Transverse colon (tissue), 4 donors: ENCODE measurements at regions of chr11 and their contacts with region 1.

Region 1: DNA sequence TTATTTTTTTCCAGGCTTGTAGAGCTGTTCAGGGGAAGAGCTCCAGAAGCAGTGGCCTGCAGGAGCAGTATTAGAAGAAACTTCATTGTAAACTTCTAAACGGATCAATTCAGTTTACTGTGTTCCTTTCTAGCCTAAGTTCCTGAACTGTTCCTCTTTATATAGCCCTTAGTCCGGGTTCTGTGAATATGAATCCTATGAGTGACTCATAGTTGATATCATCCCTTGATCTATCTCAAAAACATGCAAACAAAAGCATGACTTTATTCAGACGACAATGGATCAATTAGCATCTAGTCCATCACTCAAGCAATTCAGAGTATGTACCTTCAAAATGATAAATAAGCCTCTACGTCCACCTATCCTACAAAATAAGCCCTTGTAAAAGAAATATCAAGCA is at the start of gene MMP12:
- DNase-seq: no peak
- H3K4me3 ChIP-seq: no peak within 1 kb of the TSS
- H3K27ac ChIP-seq: no peak within 1 kb of the TSS
- H3K4me1 ChIP-seq: no peaks in the 10 kb centered on the region
- H3K27me3 ChIP-seq: no peaks in the 10 kb centered on the region
- CTCF ChIP-seq: no peak
- EP300 ChIP-seq: no peak
- POLR2A ChIP-seq: no peak
- total RNA-seq, gene MMP12: 0.55 to 4.9 TPM in 2 of 4 donors, not detected in the others

Region 2: DNA sequence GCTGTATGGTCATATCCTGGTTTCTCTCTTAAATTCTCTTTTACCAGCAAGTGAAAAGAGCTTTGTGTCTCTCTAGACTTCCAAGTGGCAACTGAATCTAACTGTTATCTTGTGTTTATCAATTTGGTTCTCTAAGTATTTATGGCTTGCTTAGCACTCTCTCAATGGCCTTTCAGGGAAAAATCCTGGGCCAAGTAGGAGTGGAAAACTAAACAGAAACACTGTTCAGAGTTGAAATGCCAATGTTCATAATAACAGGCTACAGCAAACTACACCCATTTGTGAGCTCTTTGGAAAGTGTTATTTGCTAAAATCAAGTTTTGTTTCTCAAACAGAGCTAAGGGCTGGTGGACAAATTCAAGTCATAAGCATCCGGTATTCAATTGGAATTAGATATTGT is 10.1 kb before region 1 on chr11:
- in situ Hi-C with region 1: no loop called
- intact Hi-C with region 1: loop called (anchors 1 kb)
- DNase-seq: no peak
- H3K4me3 ChIP-seq: no peak overlapping the region
- H3K27ac ChIP-seq: peak overlapping the region in 2 of 4 donors; percentile 23 to 31
- H3K4me1 ChIP-seq: peaks cover 0 to 13% (median 0%) of the 10 kb centered on the region in 4 donors
- H3K27me3 ChIP-seq: no peaks in the 10 kb centered on the region
- CTCF ChIP-seq: no peak
- EP300 ChIP-seq: no peak
- POLR2A ChIP-seq: no peak